ENCODE measurements at regions of chr22 and their contacts with region 1.

Region 1: GRCh38 chr22:42915980-42916765 is 59.1 kb upstream of the ARFGAP3 start:
- DNase-seq: peak; percentile 63
- ATAC-seq: peak; percentile 55
- H3K4me3 ChIP-seq: no peak overlapping the region; a peak in 1 of 6 replicates
- H3K27ac ChIP-seq: peak overlapping the region; percentile 71
- H3K4me1 ChIP-seq: peaks cover 94% of the 10 kb centered on the region
- H3K27me3 ChIP-seq: no peaks in the 10 kb centered on the region
- CTCF ChIP-seq: no peak
- EP300 ChIP-seq: no peak
- POLR2A ChIP-seq: no peak
- RAD21 ChIP-seq: no peak

Region 2: GRCh38 chr22:42928969-42929837 is 13.0 kb after region 1 on chr22:
- CTCF ChIA-PET with region 1: no interaction called
- POLR2A ChIA-PET with region 1: interaction called, 4 read pairs
- in situ Hi-C with region 1: no loop called
- intact Hi-C with region 1: loop called (anchors 2 kb)
- DNase-seq: peak; percentile 73
- ATAC-seq: peak; percentile 88
- H3K4me3 ChIP-seq: peak overlapping the region in 2 of 3 experiments; percentile 8 to 49; a peak in 2 of 6 replicates
- H3K27ac ChIP-seq: peak overlapping the region; percentile 65
- H3K4me1 ChIP-seq: peaks cover 80% of the 10 kb centered on the region
- H3K27me3 ChIP-seq: no peaks in the 10 kb centered on the region
- CTCF ChIP-seq: no peak
- EP300 ChIP-seq: peak in 1 of 2 experiments; percentile 28; a peak in 1 of 4 replicates
- POLR2A ChIP-seq: no peak
- RAD21 ChIP-seq: no peak